Mammary epithelial cell (primary cell): ENCODE measurements at regions of chr16 and their contacts with region 1.

Region 1: GRCh38 chr16:89887243-89887642 is 13.9 kb downstream of the TCF25 start:
- DNase-seq: no peak
- H3K4me3 ChIP-seq: no peak overlapping the region
- H3K27ac ChIP-seq: no peak overlapping the region
- H3K4me1 ChIP-seq: no peaks in the 10 kb centered on the region
- H3K27me3 ChIP-seq: no peaks in the 10 kb centered on the region
- CTCF ChIP-seq: no peak

Region 2: DNA sequence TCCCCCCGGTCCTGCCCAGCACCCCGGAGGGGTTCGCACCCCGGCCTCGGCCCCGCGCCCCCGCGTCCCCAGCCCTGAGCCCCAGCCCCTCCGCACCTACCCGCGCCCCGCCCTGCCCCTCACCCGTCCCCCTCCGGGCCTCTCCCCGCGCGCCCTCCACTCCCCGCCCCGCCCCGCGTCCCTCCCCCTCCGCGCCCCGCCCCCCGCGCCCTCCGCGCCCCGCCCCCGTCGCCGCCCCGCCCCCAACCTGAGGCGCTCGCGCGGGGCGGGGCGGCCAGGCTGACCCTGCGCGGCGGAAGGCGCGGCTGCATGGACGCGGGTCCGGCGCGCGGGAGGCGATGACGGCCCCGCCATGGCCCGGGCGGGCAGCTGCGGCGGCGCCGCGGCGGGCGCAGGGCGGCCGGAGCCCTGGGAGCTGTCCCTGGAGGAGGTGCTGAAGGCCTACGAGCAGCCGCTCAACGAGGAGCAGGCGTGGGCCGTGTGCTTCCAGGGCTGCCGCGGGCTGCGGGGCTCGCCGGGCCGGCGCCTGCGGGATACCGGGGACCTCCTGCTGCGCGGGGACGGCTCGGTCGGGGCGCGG is 59.0 kb before region 1 on chr16 and contains the start of gene SPIRE2:
- CTCF ChIA-PET with region 1: no interaction called
- dilution Hi-C with region 1: loop called (anchors 5 kb)
- in situ Hi-C with region 1: no loop called
- intact Hi-C with region 1: no loop called
- DNase-seq: peak; percentile 58
- H3K4me3 ChIP-seq: peak within 1 kb of the TSS; percentile 36 to 53 (median 52)
- H3K27ac ChIP-seq: no peak within 1 kb of the TSS
- H3K4me1 ChIP-seq: peaks cover 14% of the 10 kb centered on the region
- H3K27me3 ChIP-seq: no peaks in the 10 kb centered on the region
- CTCF ChIP-seq: no peak
- total RNA-seq, gene SPIRE2: 1.7 to 7.1 TPM

Region 3: GRCh38 chr16:89945670-89946069 is 58.4 kb after region 1 on chr16:
- CTCF ChIA-PET with region 1: no interaction called
- dilution Hi-C with region 1: loop called (anchors 5 kb)
- in situ Hi-C with region 1: no loop called
- intact Hi-C with region 1: no loop called
- DNase-seq: no peak
- H3K4me3 ChIP-seq: no peak overlapping the region
- H3K27ac ChIP-seq: no peak overlapping the region
- H3K4me1 ChIP-seq: peaks cover 13% of the 10 kb centered on the region
- H3K27me3 ChIP-seq: no peaks in the 10 kb centered on the region
- CTCF ChIP-seq: peak in 1 of 2 donors; percentile 1